Activated CD8-positive, alpha-beta T cell treated with anti-CD3 and anti-CD28 coated beads, Interleukin-2, amount 10 ng/mL, durations not matched to agents 7 days and 5 days (primary cell): ENCODE measurements at regions of chr22 and their contacts with region 1.

Region 1: DNA sequence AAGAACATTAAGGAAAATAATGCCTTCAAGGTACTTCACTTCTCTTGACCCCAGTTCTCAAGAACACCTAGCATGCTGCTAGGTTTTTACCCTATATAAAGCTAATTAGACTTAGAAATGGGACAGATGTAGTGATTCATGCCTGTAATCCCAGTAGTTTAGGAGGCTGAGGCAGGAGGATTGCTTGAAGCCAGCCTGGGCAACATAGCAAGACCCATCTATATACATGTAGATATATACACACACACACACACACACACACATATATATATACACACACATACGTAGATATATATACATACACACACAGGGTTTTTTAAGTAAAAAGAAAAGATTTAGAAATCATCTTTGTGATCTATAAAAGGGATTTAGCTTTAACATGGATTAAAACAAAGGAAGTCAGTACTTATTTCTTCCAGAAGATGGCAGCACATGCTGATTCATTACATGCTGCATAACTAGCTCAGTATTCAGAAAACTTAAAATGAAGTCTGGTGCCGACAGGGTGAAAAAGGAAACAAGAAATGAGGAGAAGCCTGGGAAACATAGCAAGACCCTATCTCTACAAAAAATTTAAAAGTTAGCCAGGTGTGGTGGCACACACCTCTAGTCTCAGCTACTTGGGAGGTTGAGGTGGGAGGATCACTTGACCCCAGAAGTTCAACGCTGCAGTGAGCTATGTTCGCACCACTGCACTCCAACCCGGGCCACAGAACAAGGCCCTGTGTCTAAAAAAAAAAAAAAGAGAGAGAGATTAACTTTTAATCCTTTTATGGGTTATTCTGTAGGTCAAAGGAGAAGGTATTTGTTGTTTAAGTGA is 28.5 kb upstream of the RBX1 start:
- DNase-seq: peak; percentile 50
- ATAC-seq: peak; percentile 86
- H3K4me3 Mint-ChIP-seq: no peak overlapping the region
- H3K27ac Mint-ChIP-seq: peak overlapping the region; percentile 60
- H3K4me1 Mint-ChIP-seq: peaks cover 4% of the 10 kb centered on the region
- H3K27me3 Mint-ChIP-seq: no peaks in the 10 kb centered on the region

Region 2: DNA sequence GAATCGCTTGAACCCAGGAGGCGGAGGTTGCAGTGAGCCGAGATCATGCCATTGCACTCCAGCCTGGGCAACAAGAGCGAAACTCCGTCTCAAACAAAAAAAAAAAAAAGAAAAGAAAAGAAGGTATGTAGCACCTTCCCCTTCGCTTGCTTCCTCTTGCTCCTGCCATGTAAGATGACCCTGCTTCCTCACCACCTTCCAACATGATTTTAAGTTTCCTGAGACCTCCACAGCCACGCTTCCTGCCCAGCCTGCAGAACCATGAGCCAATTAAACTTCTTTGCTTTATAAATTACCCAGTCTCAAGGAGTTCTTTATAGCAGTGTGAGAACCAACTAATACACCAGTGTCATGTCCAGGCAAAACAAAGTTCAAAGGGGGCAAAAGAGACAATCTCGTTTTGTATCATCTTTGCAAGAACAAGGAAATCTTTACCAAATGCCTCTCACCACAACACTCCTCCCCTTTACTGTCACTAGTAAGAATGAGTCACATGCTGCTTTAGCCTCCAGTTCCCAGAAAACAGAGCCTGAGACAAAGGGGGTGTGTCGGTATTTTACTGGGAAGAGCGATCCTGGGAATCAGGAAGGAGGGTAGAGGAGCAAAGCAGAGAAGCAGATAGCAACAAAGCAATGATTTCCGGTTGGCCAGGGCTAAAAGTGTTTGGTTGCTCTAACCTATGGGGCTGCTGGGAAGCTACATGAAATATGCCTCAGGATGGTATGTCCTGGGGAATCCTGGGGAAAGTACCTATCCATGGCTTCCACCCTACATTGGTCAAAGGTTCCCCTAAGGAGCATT is 253.9 kb before region 1 on chr22:
- CTCF ChIA-PET with region 1: no interaction called
- POLR2A ChIA-PET with region 1: no interaction called
- DNase-seq: peak; percentile 26
- ATAC-seq: peak; percentile 47
- H3K4me3 Mint-ChIP-seq: no peak overlapping the region
- H3K27ac Mint-ChIP-seq: peak overlapping the region; percentile 36
- H3K4me1 Mint-ChIP-seq: peaks cover 19% of the 10 kb centered on the region
- H3K27me3 Mint-ChIP-seq: no peaks in the 10 kb centered on the region

Region 3: DNA sequence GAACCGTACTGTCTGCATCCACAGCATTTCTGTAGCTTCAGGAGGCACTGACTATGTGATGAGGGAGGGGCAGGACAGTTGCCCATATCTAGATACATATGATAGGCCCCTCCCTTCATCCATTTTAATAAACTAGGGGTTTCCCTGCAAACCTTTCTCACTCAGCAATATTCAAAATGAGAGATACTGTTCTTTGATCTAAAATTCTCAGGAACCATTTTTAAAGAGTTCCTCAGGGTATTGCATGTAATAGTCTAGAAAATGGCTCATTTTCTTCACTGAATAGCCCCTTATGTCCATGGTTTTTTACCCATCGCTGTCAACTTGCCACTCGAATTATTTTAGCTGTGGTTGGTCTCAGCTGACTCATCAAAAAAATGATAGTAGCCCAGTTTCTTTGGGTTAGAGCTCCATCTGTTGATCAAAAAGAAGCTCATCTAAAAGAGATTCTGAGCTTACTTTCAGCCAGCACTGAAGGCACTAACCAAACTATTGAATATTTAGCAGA is 23.8 kb before region 1 on chr22:
- CTCF ChIA-PET with region 1: interaction called, 10 read pairs
- POLR2A ChIA-PET with region 1: no interaction called
- DNase-seq: peak; percentile 24
- ATAC-seq: peak; percentile 33
- H3K4me3 Mint-ChIP-seq: no peak overlapping the region
- H3K27ac Mint-ChIP-seq: no peak overlapping the region
- H3K4me1 Mint-ChIP-seq: peaks cover 8% of the 10 kb centered on the region
- H3K27me3 Mint-ChIP-seq: no peaks in the 10 kb centered on the region

Region 4: DNA sequence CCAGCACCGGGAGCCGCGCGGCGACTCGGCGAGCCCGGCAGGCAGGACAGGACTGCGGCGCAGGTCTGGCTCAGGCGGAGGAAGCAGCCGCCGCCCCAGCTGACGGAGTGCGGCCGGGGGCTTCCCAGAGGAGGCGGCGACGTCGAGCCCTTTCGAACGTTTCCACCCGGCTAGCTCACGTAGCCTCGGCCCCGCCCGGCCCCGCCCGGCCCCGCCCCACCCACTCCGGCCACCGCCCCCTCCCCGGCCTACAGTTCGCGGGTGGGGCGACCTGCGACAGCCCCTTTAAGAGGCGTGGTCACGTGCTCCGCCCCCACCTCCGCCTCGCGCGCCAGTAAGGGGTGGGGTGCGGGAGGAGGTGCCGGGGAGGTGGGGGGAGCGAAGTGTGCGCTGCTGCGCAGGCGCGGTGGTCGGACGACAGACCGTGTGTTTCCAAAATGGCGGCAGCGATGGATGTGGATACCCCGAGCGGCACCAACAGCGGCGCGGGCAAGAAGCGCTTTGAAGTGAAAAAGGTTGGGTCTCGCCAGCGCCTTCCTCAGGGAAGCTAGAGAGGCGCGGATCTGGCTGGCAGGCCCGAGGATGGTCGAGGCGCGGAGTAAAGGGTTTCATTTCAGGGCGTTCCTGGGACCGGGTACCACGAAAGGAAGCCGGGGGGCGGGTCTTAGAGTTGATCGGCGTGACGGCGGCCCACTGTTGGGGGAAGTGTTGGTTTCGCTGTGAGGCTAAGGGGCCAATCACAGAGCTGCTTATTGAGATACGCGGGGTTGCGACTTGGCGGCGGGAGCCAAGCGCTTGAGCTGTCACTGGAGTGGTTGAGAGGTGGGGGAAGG is 28.5 kb after region 1 on chr22 and contains the start of gene RBX1:
- CTCF ChIA-PET with region 1: interaction called, 30 read pairs
- POLR2A ChIA-PET with region 1: interaction called, 14 read pairs
- DNase-seq: peak; percentile 99
- ATAC-seq: peak; percentile 84
- H3K4me3 Mint-ChIP-seq: peak within 1 kb of the TSS; percentile 100
- H3K27ac Mint-ChIP-seq: peak within 1 kb of the TSS; percentile 100
- H3K4me1 Mint-ChIP-seq: peaks cover 34% of the 10 kb centered on the region
- H3K27me3 Mint-ChIP-seq: no peaks in the 10 kb centered on the region
- total RNA-seq, gene RBX1: 84.0 to 87.9 TPM

Region 5: GRCh38 chr22:41091132-41092022 is 168.7 kb after region 1 on chr22:
- CTCF ChIA-PET with region 1: interaction called, 24 read pairs
- POLR2A ChIA-PET with region 1: no interaction called
- DNase-seq: peak; percentile 99
- ATAC-seq: peak; percentile 87
- H3K4me3 Mint-ChIP-seq: peak overlapping the region; percentile 97
- H3K27ac Mint-ChIP-seq: peak overlapping the region; percentile 100
- H3K4me1 Mint-ChIP-seq: peaks cover 23% of the 10 kb centered on the region
- H3K27me3 Mint-ChIP-seq: no peaks in the 10 kb centered on the region

Region 6: GRCh38 chr22:41237707-41238569 is 315.2 kb after region 1 on chr22:
- CTCF ChIA-PET with region 1: interaction called, 114 read pairs
- POLR2A ChIA-PET with region 1: interaction called, 10 read pairs
- DNase-seq: peak; percentile 90
- ATAC-seq: peak; percentile 95
- H3K4me3 Mint-ChIP-seq: no peak overlapping the region
- H3K27ac Mint-ChIP-seq: no peak overlapping the region
- H3K4me1 Mint-ChIP-seq: peaks cover 6% of the 10 kb centered on the region
- H3K27me3 Mint-ChIP-seq: no peaks in the 10 kb centered on the region